Lower lobe of right lung (tissue), 2 donors: ENCODE measurements at regions of chr1 and their contacts with region 1.

Region 1: DNA sequence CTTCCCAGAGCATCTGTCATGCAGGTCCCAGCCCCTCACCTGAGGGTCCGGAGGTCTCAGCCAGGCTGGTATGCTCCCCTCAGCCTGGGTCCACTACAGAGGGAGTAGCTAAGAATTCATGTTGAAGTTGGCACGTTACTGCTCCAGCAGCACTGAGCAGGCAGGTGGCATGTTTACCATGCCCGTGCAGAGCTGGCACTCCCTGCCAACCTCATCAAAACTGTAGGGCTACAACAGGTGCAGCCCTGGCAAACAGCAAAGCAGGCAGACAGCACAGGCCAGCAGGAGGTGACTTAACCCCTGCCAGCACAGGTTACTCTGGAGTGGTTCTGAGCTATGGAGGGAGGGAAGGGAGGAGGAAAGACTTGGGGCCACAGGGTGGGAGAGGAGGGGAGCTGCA is 46.4 kb downstream of the NUAK2 start:
- DNase-seq: peak; percentile 75
- ATAC-seq: peak; percentile 78 to 83
- H3K4me3 ChIP-seq: no peak overlapping the region
- H3K27ac ChIP-seq: peak overlapping the region; percentile 41
- H3K4me1 ChIP-seq: peaks cover 37% of the 10 kb centered on the region
- H3K27me3 ChIP-seq: no peaks in the 10 kb centered on the region
- CTCF ChIP-seq: no peak

Region 2: DNA sequence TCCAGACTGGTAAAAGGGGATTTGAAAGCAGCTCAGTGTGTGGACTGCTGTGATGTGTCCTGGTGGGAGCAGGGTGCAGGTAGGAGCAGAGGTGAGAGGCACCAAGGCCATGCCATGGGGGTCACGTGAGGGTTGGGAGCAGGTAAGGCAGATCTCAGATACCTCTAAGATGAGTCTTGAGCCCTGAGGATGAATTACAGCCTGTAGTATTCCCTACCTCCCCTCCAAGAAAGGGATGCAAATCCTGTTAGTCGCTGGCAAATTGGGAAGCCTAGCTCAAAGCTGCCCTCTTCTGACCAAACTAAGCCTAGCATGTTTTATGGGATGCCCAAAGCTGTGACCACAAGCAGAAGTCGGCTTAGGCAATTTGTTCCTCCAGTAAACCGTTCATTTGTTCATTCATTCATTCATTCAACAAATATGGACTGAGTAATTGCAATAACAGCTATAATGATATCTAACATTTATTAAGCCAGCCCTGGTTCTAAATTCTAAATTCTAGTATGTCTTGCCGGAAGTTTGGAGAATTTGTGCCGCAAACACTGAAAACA is 50.3 kb after region 1 on chr1:
- intact Hi-C with region 1: loop called (anchors 2 kb)
- DNase-seq: no peak
- ATAC-seq: peak; percentile 51 to 64
- H3K4me3 ChIP-seq: no peak overlapping the region
- H3K27ac ChIP-seq: no peak overlapping the region
- H3K4me1 ChIP-seq: peaks cover 24% of the 10 kb centered on the region
- H3K27me3 ChIP-seq: no peaks in the 10 kb centered on the region
- CTCF ChIP-seq: peak; percentile 81

Region 3: DNA sequence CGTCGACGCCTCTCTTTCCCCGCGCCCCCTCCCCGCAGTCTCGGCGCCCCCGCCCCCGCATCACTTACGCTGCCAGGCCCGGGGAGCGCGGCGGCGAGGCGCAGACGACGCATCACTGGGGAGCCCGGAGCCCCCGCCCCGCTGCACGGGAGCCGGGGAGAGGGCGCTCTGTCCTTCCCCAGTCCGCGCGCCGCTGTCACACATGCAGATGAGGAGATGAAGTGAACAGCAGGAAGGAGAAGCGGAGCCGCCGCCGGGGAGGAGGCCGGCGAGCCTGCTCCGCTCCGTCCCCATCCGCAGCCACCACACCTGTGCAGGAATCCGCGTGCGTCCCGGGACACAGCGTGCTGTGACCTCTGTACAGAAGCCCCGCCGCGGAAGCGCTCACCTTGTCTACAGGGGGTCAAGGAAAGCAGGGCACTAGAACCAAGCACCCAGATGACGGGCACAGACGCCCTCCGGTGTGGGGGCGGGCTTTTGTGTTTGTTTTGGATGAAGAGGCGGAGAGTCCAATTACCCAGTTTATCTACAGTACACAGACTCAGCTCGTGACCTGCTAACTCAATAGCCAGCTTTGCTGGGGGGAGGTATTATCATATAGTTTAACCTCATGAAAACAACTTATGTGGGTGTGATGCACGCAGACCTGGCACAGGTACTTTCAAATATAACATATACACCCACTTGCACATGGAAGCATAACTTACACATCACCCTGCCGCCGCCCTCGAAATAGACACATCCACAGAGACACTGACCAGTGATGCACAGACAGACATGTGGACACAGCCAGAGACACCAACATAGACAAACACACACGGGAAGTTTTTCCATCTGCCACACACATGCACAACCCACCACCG is 69.2 kb after region 1 on chr1:
- intact Hi-C with region 1: no loop called
- DNase-seq: peak; percentile 62
- ATAC-seq: peak; percentile 60 to 74
- H3K4me3 ChIP-seq: peak overlapping the region; percentile 42
- H3K27ac ChIP-seq: no peak overlapping the region
- H3K4me1 ChIP-seq: peaks cover 15% of the 10 kb centered on the region
- H3K27me3 ChIP-seq: peaks cover 45% of the 10 kb centered on the region
- CTCF ChIP-seq: no peak

Region 4: DNA sequence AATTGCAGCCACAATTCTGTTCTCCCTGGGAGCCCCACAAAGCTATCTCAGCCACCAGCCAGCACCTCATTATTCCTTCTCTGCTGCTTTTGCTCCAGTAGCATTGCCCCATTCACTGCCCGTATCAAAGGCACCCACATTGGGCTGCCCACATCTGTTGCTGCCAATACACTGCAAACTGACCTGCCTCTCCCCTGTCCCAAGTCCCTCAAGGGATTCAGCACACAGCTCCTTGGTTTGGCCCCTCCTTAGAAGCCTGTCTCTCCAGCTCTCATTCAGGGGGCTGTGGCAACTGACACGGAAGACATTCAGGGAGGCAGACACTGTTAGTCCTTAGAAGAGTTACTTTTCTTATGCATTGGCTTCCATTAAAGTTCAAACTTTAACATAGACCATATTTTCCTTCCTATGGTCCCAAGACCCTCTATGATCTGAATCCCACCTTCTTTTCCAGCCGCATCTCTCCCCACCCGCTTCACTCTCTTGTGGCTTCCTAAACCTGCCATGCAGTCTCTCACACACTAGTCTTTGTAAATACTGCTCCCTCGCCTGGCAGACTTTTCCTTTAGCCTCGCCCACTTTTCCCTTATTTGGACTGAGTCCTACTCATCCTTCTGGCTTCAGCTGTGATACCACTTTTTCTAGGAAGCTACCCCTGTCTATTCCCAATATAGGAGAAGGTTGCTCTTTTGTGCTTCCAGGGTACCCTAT is 100.9 kb after region 1 on chr1:
- intact Hi-C with region 1: no loop called
- DNase-seq: no peak
- ATAC-seq: peak; percentile 55 to 57
- H3K4me3 ChIP-seq: no peak overlapping the region
- H3K27ac ChIP-seq: no peak overlapping the region
- H3K4me1 ChIP-seq: peaks cover 26% of the 10 kb centered on the region
- H3K27me3 ChIP-seq: peaks cover 5% of the 10 kb centered on the region
- CTCF ChIP-seq: no peak

Region 5: DNA sequence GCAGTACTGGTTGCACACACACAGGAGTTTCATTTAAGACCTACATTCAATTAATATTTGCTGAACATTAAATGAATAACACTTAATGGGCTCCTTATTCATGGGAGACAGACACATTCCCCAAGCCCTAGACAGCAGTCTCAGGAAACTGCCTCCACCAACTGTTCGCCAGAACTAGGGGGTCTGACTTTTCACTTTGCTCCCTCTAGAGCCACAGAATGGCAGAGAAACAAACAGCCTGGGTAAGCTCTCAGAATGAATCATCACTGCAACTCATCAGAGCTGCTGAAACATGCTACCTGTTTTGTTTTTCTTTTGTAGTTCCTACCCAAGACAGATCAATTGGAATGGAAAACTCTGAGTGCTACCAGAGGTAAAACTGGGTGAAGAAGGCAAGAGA is 325.0 kb after region 1 on chr1:
- intact Hi-C with region 1: no loop called
- DNase-seq: no peak
- ATAC-seq: no peak
- H3K4me3 ChIP-seq: no peak overlapping the region
- H3K27ac ChIP-seq: peak overlapping the region; percentile 44
- H3K4me1 ChIP-seq: peaks cover 22% of the 10 kb centered on the region
- H3K27me3 ChIP-seq: no peaks in the 10 kb centered on the region
- CTCF ChIP-seq: no peak